MCF 10A (cell line): ENCODE measurements at regions of chr3 and their contacts with region 1.

Region 1: GRCh38 chr3:10010486-10011465 is 15.5 kb upstream of the FANCD2 start:
- DNase-seq: peak; percentile 91
- H3K4me3 Mint-ChIP-seq: peak overlapping the region; percentile 69
- H3K27ac Mint-ChIP-seq: no peak overlapping the region
- H3K4me1 Mint-ChIP-seq: peaks cover 15% of the 10 kb centered on the region
- H3K27me3 Mint-ChIP-seq: no peaks in the 10 kb centered on the region
- CTCF ChIP-seq: no peak

Region 2: GRCh38 chr3:9976721-9977709 is 33.8 kb before region 1 on chr3:
- CTCF ChIA-PET with region 1: no interaction called
- POLR2A ChIA-PET with region 1: interaction called, 10 read pairs
- intact Hi-C with region 1: no loop called
- DNase-seq: peak; percentile 97
- H3K4me3 Mint-ChIP-seq: peak overlapping the region; percentile 39
- H3K27ac Mint-ChIP-seq: peak overlapping the region; percentile 70
- H3K4me1 Mint-ChIP-seq: peaks cover 26% of the 10 kb centered on the region
- H3K27me3 Mint-ChIP-seq: no peaks in the 10 kb centered on the region
- CTCF ChIP-seq: no peak

Region 3: GRCh38 chr3:9986237-9986725 is 24.5 kb before region 1 on chr3:
- CTCF ChIA-PET with region 1: interaction called, 4 read pairs
- POLR2A ChIA-PET with region 1: interaction called, 14 read pairs
- intact Hi-C with region 1: no loop called
- DNase-seq: no peak
- H3K4me3 Mint-ChIP-seq: peak overlapping the region; percentile 94
- H3K27ac Mint-ChIP-seq: peak overlapping the region; percentile 96
- H3K4me1 Mint-ChIP-seq: peaks cover 15% of the 10 kb centered on the region
- H3K27me3 Mint-ChIP-seq: no peaks in the 10 kb centered on the region
- CTCF ChIP-seq: no peak

Region 4: DNA sequence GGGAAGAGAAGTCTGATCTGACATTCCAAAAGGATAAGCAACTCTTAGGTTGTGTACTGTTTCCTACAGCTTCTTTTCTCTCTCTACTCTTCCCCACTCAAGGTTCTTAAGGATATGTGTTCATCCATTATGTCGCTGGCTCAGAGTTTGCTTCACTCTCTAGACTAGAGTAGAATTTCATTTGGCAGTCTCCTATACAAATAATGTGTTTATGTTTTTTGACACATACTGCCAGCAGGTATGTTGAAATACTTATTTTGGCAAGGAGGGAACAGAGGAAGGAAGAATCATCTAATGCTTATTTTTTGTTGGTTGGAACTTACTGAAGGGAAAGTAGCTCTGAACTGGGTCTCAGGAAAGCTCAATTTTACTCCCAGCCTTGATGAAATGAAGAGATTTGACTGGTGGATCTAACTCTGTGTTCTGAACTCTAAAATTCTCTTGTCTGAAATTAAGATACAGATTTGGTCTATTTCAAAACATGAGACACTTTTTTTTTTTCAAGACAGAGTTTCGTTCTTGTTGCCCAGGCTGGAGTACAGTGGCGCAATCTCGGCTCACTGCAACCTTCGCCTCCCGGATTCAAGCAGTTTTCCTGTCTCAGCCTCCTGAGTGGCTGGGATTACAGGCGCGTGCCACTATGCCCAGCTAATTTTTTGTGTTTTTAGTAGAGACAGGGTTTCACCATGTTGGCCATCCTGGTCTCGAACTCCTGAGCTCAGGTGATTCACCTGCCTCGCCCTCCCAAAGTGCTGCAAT is 16.5 kb before region 1 on chr3:
- CTCF ChIA-PET with region 1: no interaction called
- POLR2A ChIA-PET with region 1: interaction called, 15 read pairs
- intact Hi-C with region 1: no loop called
- DNase-seq: peak; percentile 93
- H3K4me3 Mint-ChIP-seq: peak overlapping the region; percentile 71
- H3K27ac Mint-ChIP-seq: peak overlapping the region; percentile 92
- H3K4me1 Mint-ChIP-seq: peaks cover 18% of the 10 kb centered on the region
- H3K27me3 Mint-ChIP-seq: no peaks in the 10 kb centered on the region
- CTCF ChIP-seq: no peak

Region 5: GRCh38 chr3:10026084-10026890 is 15.5 kb after region 1 on chr3 and contains the start of gene FANCD2:
- CTCF ChIA-PET with region 1: interaction called, 4 read pairs
- POLR2A ChIA-PET with region 1: interaction called, 28 read pairs
- intact Hi-C with region 1: no loop called
- DNase-seq: peak; percentile 85
- H3K4me3 Mint-ChIP-seq: peak within 1 kb of the TSS; percentile 88
- H3K27ac Mint-ChIP-seq: peak within 1 kb of the TSS; percentile 87
- H3K4me1 Mint-ChIP-seq: peaks cover 11% of the 10 kb centered on the region
- H3K27me3 Mint-ChIP-seq: no peaks in the 10 kb centered on the region
- CTCF ChIP-seq: no peak
- total RNA-seq, gene FANCD2: 14.6 and 24.6 TPM in 2 replicates